ENCODE measurements at regions of chr11 and their contacts with region 1.

Region 1: GRCh38 chr11:74929431-74930363 is 19.2 kb downstream of the XRRA1 start:
- DNase-seq: peak in 41 of 42 donors; percentile 34 to 92 (median 81)

Region 2: DNA sequence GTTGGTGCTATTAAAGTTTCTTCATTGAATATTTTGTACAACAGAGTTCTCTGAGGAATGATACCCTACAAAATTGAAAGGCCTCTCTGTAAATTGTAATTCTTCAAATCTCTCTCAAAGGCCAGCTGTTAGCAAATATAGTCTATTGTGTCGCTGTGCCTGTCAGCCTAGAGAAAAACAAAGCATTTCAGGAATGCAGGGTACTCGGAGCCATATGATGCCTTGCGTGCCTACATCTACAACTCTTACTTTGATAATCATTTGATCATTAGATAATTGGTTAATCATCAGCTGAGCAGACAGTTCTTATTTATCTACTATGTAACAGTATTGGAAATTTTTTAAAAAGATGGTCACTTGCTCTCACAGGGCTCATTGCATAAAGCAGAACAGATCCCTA is 113.7 kb before region 1 on chr11:
- intact Hi-C with region 1: no loop called
- DNase-seq: no peak

Region 3: GRCh38 chr11:74980634-74981033 is 50.9 kb after region 1 on chr11:
- intact Hi-C with region 1: no loop called
- DNase-seq: no peak

Region 4: DNA sequence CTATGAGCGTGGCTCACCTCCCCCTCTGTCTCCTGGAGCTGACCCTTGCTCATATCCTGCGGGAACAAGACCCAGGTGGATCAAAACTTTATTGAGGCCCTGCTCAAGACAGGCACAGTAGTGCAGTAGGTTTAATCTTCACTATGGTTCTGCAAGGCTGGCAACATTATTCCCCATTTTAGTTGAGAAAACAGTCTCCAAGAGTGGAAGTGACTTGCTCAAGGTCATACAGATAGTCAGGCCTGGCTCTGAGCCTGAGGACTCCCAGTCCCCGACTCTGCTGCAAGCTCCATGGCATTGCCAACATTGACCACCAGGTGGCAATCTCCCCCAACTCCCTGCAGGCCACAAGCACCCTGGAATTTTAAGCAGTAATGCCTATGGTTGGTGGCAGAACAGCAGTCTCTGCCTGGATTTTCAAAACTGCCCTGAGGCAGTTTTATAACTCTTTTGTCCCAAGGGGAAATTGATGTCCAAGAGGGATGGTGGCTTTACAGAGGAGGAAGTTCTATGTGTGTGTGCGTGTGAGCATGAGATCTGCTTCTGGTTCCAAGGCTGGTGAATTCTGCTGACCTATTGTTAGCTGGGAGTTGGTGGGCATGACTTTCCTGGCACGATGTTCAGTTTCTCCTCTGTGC is 93.2 kb after region 1 on chr11:
- intact Hi-C with region 1: loop called (anchors 10 kb)
- DNase-seq: peak; percentile 42 to 94 (median 86)